ENCODE measurements at regions of chr11 and their contacts with region 1.

Region 1: GRCh38 chr11:81644239-81644840 is 1089.3 kb downstream of the FAM181B start:
- DNase-seq: no peak
- H3K4me3 ChIP-seq: no peak overlapping the region
- H3K27ac ChIP-seq: no peak overlapping the region
- H3K4me1 ChIP-seq: no peaks in the 10 kb centered on the region
- H3K27me3 ChIP-seq: no peaks in the 10 kb centered on the region
- CTCF ChIP-seq: peak; percentile 44 to 60 (median 52)
- EP300 ChIP-seq: no peak
- POLR2A ChIP-seq: no peak

Region 2: DNA sequence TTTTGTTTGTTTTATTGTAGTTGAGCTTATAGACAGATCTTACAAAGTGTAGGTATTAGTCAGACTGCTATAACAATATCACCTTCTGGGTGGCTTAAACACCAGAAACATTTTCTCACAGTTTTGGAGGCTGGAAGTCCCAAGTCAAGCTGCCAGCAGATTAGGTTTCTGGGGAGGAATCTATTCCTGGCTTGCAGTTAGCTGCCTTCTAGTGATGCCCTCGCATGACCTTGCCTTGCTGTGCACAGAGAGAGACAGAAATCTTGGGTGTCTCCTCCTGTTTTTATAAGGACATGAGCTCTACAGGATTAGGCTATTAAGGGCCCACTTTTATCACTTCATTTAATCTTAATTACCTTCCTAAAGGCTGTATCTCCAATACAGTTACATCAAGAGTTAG is 545.9 kb before region 1 on chr11:
- in situ Hi-C with region 1: no loop called
- intact Hi-C with region 1: no loop called
- DNase-seq: no peak
- H3K4me3 ChIP-seq: no peak overlapping the region
- H3K27ac ChIP-seq: no peak overlapping the region
- H3K4me1 ChIP-seq: no peaks in the 10 kb centered on the region
- H3K27me3 ChIP-seq: no peaks in the 10 kb centered on the region
- CTCF ChIP-seq: no peak
- EP300 ChIP-seq: no peak
- POLR2A ChIP-seq: no peak

Region 3: DNA sequence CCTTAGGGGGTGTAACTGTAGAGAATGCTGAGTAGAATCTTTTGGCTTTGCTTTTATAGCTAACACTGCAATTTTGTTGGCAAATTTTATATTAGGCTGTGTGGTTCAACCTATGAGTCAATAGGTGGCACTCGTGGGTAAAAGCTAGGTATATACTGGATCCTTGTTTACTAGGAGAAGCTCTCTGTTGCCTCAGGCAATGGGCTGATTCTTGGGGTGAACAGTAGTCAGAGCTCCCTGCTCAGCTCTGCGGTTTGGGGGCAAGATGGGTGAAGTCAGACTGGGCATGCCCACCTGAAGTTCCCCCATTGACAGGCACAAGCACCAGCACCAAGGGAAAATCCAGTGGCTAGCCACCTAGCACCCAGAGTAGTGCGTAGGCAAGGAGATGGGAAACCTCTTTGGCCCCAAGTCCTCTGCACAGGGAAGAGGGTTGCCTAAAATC is 850.7 kb after region 1 on chr11:
- in situ Hi-C with region 1: loop called in 1 of 4 experiments (anchors 10 kb)
- intact Hi-C with region 1: no loop called
- DNase-seq: no peak
- H3K4me3 ChIP-seq: no peak overlapping the region
- H3K27ac ChIP-seq: no peak overlapping the region
- H3K4me1 ChIP-seq: no peaks in the 10 kb centered on the region
- H3K27me3 ChIP-seq: no peaks in the 10 kb centered on the region
- CTCF ChIP-seq: peak in 4 of 5 experiments; percentile 15 to 20 (median 17)
- EP300 ChIP-seq: no peak
- POLR2A ChIP-seq: no peak

Region 4: GRCh38 chr11:82682003-82682751 is 1037.8 kb after region 1 on chr11:
- in situ Hi-C with region 1: loop called in 2 of 4 experiments (anchors 25 kb)
- intact Hi-C with region 1: no loop called
- DNase-seq: peak; percentile 16
- H3K4me3 ChIP-seq: no peak overlapping the region
- H3K27ac ChIP-seq: no peak overlapping the region
- H3K4me1 ChIP-seq: peaks cover 0 to 11% (median 5%) of the 10 kb centered on the region in 4 donors
- H3K27me3 ChIP-seq: peaks cover 3% of the 10 kb centered on the region
- CTCF ChIP-seq: peak; percentile 49 to 75 (median 57)
- EP300 ChIP-seq: no peak
- POLR2A ChIP-seq: no peak

Region 5: DNA sequence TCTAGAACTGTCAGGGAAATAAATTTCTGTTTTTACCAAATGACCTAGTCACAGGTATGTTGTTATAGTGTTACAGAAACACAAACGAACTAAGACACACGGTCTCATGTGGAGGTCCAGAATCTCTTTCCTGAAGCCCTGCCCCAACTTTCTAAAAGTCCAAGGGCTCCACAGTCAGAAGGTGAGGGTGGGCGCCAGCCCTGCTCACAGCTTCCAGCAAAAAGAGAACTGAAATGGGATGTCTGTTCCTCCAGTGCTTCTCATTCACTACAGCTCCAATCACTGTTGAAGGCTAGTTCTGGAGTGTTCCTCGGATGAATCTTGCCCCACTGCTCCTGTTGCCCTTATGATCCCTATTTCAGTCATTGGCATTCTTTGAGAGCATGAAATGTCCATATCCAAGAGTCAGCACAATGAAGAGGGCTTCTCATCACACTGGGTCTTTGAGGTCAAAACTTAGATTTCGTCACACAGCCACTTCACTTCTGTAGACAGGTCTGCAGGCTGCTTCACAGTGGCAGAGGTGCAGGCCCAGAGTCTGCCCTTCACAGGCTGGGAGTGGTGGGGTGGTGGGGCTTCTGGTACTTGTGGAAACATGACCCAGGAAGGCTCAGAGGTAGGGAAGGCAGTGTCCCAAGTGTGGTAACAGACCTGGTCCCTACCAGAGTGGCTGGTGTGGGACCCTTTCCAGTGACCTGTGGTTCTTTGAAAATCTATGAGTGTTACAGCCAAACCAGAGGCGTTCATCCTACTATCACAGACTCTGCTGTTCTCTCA is 1054.4 kb after region 1 on chr11:
- in situ Hi-C with region 1: loop called (anchors 5 to 25 kb)
- intact Hi-C with region 1: no loop called
- DNase-seq: no peak
- H3K4me3 ChIP-seq: no peak overlapping the region
- H3K27ac ChIP-seq: no peak overlapping the region
- H3K4me1 ChIP-seq: no peaks in the 10 kb centered on the region
- H3K27me3 ChIP-seq: no peaks in the 10 kb centered on the region
- CTCF ChIP-seq: no peak
- EP300 ChIP-seq: no peak
- POLR2A ChIP-seq: no peak

Measured in transverse colon (tissue), 4 donors.